ENCODE measurements at regions of chr12 and their contacts with region 1.

Region 1: DNA sequence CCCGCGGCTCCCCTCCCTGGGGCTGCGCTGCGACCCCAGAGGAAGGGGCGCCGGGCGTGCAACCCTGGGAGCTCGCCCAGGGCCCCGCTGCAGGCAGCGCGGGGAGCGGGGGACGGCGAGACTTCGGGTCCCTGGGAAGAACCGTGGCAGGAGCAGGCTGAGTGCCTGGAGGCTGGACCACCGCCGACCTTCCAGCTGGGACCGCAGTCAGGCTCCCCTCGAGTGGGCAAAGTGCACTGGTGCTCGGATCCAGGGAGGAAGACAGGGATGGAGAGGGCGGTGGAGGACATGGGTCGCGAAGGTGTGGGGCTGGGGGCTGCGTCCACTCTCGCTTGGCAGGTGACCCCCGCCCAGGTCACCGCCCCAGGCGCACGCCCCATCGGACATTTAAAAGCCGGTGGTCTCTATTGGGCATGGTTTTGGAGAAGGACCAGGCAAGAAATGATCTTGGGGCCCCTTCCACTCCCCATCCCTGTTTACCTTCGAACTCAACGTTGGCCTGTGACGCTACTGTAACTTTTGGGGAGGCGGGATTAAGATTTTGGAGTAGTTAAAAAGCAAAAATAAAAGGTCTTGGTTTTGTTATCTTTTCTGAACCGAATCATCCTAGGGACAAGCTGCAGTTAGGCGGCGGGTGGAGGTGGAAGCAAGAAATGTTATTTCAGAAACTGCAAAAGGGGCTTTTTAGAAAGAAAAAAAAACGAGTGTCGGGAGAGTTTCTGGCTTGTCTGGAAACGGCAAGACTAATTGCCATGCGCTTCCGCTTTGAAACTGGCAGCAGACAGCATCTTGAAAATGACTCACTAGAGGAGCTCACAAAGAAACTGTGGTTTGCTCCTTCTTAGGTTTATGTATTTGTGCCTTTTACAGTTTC is 1.0 kb downstream of the ELK3 start:
- DNase-seq: peak; percentile 32 to 90 (median 70)
- ATAC-seq: peak; percentile 67 to 77 (median 70)
- H3K4me3 ChIP-seq: peak overlapping the region; percentile 76 to 93
- H3K4me3 Mint-ChIP-seq: peak overlapping the region; percentile 98 to 100 (median 99)
- H3K27ac ChIP-seq: peak overlapping the region; percentile 90
- H3K27ac Mint-ChIP-seq: peak overlapping the region; percentile 99
- H3K4me1 ChIP-seq: peaks cover 25 to 30% of the 10 kb centered on the region in 2 experiments
- H3K4me1 Mint-ChIP-seq: peaks cover 53 to 54% (median 54%) of the 10 kb centered on the region in 3 donors
- H3K27me3 ChIP-seq: no peaks in the 10 kb centered on the region
- H3K27me3 Mint-ChIP-seq: no peaks in the 10 kb centered on the region

Region 2: GRCh38 chr12:95859344-95859816 is 335.8 kb before region 1 on chr12:
- CTCF ChIA-PET with region 1: no interaction called
- POLR2A ChIA-PET with region 1: interaction called in 1 of 2 experiments, 13 read pairs
- DNase-seq: peak in 3 of 35 experiments; percentile 7 to 27 (median 20)
- ATAC-seq: peak in 3 of 4 experiments; percentile 4 to 10 (median 6)
- H3K4me3 ChIP-seq: peak overlapping the region; percentile 88 to 95
- H3K4me3 Mint-ChIP-seq: no peak overlapping the region
- H3K27ac ChIP-seq: peak overlapping the region; percentile 84
- H3K27ac Mint-ChIP-seq: no peak overlapping the region
- H3K4me1 ChIP-seq: peaks cover 13 to 26% of the 10 kb centered on the region in 2 experiments
- H3K4me1 Mint-ChIP-seq: peaks cover 5 to 31% (median 31%) of the 10 kb centered on the region in 3 donors
- H3K27me3 ChIP-seq: peaks cover 0 to 3% of the 10 kb centered on the region in 2 experiments
- H3K27me3 Mint-ChIP-seq: peaks cover 0 to 3% of the 10 kb centered on the region in 2 donors

Region 3: GRCh38 chr12:96035278-96036236 is 159.7 kb before region 1 on chr12 and contains the start of gene LTA4H:
- CTCF ChIA-PET with region 1: no interaction called
- POLR2A ChIA-PET with region 1: no interaction called
- DNase-seq: peak; percentile 90 to 99 (median 96)
- ATAC-seq: peak; percentile 91 to 95 (median 94)
- H3K4me3 ChIP-seq: peak within 1 kb of the TSS; percentile 83 to 92
- H3K4me3 Mint-ChIP-seq: no peak within 1 kb of the TSS
- H3K27ac ChIP-seq: peak within 1 kb of the TSS; percentile 73
- H3K27ac Mint-ChIP-seq: no peak within 1 kb of the TSS
- H3K4me1 ChIP-seq: peaks cover 5 to 18% of the 10 kb centered on the region in 2 experiments
- H3K4me1 Mint-ChIP-seq: peaks cover 9 to 11% (median 10%) of the 10 kb centered on the region in 3 donors
- H3K27me3 ChIP-seq: no peaks in the 10 kb centered on the region
- H3K27me3 Mint-ChIP-seq: no peaks in the 10 kb centered on the region
- total RNA-seq, gene LTA4H: 50.5 to 61.6 (median 58.7) TPM

Region 4: GRCh38 chr12:96078231-96079135 is 116.7 kb before region 1 on chr12:
- CTCF ChIA-PET with region 1: no interaction called
- POLR2A ChIA-PET with region 1: no interaction called
- DNase-seq: no peak
- ATAC-seq: no peak
- H3K4me3 ChIP-seq: no peak overlapping the region
- H3K4me3 Mint-ChIP-seq: no peak overlapping the region
- H3K27ac ChIP-seq: no peak overlapping the region
- H3K27ac Mint-ChIP-seq: no peak overlapping the region
- H3K4me1 ChIP-seq: peaks cover 0 to under 1% of the 10 kb centered on the region in 2 experiments
- H3K4me1 Mint-ChIP-seq: peaks cover 0 to 4% (median 2%) of the 10 kb centered on the region in 3 donors
- H3K27me3 ChIP-seq: no peaks in the 10 kb centered on the region
- H3K27me3 Mint-ChIP-seq: peaks cover 0 to 2% of the 10 kb centered on the region in 2 donors

Region 5: GRCh38 chr12:96208801-96209549 is 13.8 kb after region 1 on chr12:
- CTCF ChIA-PET with region 1: interaction called, 3 to 17 read pairs
- POLR2A ChIA-PET with region 1: interaction called, 3 to 4 read pairs
- DNase-seq: no peak
- ATAC-seq: peak in 3 of 4 experiments; percentile 11 to 17 (median 13)
- H3K4me3 ChIP-seq: peak overlapping the region in 1 of 2 donors; percentile 25
- H3K4me3 Mint-ChIP-seq: peak overlapping the region; percentile 71 to 79 (median 73)
- H3K27ac ChIP-seq: peak overlapping the region; percentile 48
- H3K27ac Mint-ChIP-seq: peak overlapping the region; percentile 97
- H3K4me1 ChIP-seq: peaks cover 77 to 84% of the 10 kb centered on the region in 2 experiments
- H3K4me1 Mint-ChIP-seq: peaks cover 99 to 100% (median 99%) of the 10 kb centered on the region in 3 donors
- H3K27me3 ChIP-seq: no peaks in the 10 kb centered on the region
- H3K27me3 Mint-ChIP-seq: no peaks in the 10 kb centered on the region